ENCODE measurements at regions of chr1 and their contacts with region 1.

Region 1: GRCh38 chr1:223628233-223629125 is 37.0 kb downstream of the CAPN8 start:
- DNase-seq: peak; percentile 58
- H3K4me3 Mint-ChIP-seq: no peak overlapping the region
- H3K27ac Mint-ChIP-seq: no peak overlapping the region
- H3K4me1 Mint-ChIP-seq: no peaks in the 10 kb centered on the region
- H3K27me3 Mint-ChIP-seq: peaks cover 12% of the 10 kb centered on the region

Region 2: DNA sequence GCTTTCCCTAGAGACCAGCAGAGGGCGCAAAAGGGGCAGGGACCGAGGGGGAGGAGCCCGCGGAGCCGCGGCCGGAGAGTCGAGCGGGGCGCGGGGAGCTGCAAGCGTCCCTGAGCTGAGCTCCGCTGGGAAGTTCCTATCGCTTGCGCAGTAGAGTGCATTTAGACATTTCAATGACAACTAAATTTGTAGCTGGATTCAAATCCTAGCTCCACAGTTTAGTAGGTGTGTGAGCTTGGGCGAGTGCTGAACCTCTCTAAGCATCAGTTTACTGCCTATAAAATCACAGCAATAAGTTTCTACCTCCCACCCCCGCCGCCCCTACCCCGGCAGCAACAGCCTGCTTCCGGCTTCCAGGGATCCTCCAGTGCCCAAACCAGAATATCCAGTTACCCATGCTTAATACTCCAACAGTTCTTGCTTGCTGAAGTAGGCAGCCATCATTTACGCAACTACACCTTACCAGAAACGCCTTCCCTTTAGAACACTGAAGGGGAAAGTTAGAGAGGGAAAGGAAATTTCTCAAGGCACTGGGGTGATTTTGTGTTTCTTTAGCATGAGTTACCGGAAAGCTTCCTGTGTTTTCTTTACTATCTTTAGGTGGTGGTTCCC is 494.5 kb before region 1 on chr1:
- CTCF ChIA-PET with region 1: interaction called, 10 read pairs
- DNase-seq: peak; percentile 83
- H3K4me3 Mint-ChIP-seq: peak overlapping the region; percentile 2
- H3K27ac Mint-ChIP-seq: no peak overlapping the region
- H3K4me1 Mint-ChIP-seq: peaks cover 8% of the 10 kb centered on the region
- H3K27me3 Mint-ChIP-seq: peaks cover 54% of the 10 kb centered on the region

Region 3: DNA sequence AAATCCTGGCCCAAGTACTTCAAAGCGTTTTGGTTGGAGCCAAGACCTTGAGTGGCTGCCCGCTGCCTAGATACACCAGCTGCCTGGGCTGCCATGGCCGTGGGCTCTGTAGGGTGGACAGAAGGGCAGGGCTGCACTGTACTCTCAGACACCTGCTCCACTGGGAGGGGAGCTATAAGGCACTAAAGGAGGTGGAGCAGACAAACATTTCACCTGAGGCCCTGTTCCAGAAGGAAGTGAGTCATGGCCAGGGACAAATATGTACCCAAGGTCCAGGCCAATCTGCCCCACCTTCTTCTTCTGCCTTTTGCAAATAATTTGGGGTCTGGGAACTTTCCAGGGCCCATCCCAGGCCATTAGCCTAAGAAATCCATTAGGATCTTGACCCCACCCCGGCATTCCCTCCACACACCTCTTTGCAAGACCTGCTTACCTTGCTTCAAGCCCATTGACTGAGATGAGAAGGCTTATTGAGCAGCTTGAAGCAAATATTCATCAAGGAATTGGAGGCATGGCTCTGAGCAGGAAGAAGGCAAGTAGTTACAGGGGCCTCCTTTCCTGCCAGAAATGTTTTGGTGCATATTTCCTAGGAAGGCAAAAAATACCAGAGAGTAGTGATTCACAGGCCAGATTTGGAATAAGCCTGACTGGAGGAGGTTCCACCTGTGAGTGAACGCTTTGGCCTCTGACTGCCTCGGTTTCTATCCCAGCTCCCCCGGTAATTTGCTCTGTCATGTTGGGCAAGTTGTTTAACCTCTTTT is 37.3 kb after region 1 on chr1 and contains the start of gene CAPN8:
- CTCF ChIA-PET with region 1: no interaction called
- DNase-seq: no peak
- H3K4me3 Mint-ChIP-seq: no peak within 1 kb of the TSS
- H3K27ac Mint-ChIP-seq: no peak within 1 kb of the TSS
- H3K4me1 Mint-ChIP-seq: no peaks in the 10 kb centered on the region
- H3K27me3 Mint-ChIP-seq: peaks cover 20% of the 10 kb centered on the region